Activated CD4-positive, alpha-beta T cell treated with anti-CD3 and anti-CD28 coated beads for 36 hours (primary cell): ENCODE measurements at regions of chr21 and their contacts with region 1.

Region 1: DNA sequence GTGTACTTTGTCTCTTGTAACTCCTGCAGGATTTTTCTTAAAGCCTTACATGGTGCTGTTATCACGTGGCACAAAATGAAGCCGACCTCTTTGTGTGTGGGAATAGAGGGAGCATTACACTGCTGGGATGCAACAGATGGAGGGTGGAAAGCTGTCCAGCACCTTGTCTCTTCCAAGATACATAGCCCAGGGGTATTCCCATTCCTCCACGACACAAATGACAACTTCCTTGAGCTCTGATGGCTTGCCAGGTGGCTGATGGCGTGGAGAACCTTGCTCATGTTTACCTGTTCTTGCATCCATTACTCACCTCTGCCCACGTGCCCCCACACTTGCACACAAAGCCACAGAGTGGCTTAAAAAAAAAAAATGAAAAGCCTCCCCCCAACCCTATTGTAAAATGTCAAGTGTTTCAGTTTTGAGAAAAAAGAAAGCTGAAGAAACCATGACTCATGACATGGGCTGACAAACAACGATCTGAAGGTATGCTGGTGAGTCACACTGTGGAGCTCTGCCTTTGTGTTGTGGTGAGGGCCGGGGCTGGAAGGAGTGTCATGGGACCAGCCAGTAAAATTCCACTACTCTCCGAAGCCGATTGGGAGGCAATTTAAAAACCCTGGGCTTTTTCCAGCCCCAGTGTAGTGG is 32.0 kb upstream of the ATP5PO start:
- DNase-seq: peak; percentile 92
- ATAC-seq: peak; percentile 63
- H3K4me3 Mint-ChIP-seq: peak overlapping the region; percentile 70
- H3K27ac Mint-ChIP-seq: peak overlapping the region; percentile 100
- H3K4me1 Mint-ChIP-seq: peaks cover 79% of the 10 kb centered on the region
- H3K27me3 Mint-ChIP-seq: no peaks in the 10 kb centered on the region

Region 2: DNA sequence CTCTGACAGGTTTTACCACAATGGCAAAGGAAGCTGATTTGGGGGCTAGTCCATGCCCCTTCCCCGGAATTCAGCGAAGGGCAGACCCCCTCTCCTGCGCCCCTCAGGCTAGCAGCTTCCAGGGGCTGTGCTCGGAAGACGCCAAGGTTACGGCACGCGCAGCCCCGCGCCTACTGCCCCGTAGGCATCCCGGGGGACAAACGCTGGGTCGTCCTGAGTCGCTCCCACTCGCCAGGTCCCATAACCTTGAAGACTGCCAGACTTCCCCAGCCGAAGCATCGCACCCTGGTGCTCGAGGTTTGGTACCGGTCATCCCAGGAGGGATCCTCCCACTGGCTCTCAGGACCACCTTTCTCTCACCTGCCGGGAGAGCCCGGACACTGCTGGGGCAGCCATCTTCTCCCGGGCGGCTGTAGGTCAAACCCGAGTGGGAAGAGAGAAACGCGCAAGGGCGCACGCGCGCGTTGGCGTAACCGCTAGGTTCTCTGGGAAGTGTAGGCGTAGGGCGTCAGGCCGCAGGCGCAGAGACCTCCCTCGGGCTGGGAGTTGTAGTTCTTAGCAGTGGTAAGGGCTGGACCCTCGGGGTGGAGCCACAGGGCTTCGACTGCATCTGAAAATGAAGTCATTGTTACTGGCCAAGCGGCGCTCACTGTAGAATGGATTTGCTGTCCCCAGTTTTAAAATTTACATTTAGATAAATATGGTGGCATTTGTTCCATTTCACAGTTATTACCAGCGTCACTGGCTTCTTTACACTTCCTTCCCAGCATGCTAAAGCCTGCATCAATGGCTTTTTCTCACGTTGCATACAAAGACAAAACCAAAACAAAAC is 32.0 kb before region 1 on chr21 and contains the start of gene ATP5PO:
- CTCF ChIA-PET with region 1: no interaction called
- POLR2A ChIA-PET with region 1: no interaction called
- intact Hi-C with region 1: loop called in 1 of 2 experiments (anchors 1 kb)
- DNase-seq: peak; percentile 98
- ATAC-seq: peak; percentile 99
- H3K4me3 Mint-ChIP-seq: peak within 1 kb of the TSS; percentile 89
- H3K27ac Mint-ChIP-seq: peak within 1 kb of the TSS; percentile 97
- H3K4me1 Mint-ChIP-seq: peaks cover 27% of the 10 kb centered on the region
- H3K27me3 Mint-ChIP-seq: no peaks in the 10 kb centered on the region
- total RNA-seq, gene ATP5PO: 177 to 238 TPM

Region 3: DNA sequence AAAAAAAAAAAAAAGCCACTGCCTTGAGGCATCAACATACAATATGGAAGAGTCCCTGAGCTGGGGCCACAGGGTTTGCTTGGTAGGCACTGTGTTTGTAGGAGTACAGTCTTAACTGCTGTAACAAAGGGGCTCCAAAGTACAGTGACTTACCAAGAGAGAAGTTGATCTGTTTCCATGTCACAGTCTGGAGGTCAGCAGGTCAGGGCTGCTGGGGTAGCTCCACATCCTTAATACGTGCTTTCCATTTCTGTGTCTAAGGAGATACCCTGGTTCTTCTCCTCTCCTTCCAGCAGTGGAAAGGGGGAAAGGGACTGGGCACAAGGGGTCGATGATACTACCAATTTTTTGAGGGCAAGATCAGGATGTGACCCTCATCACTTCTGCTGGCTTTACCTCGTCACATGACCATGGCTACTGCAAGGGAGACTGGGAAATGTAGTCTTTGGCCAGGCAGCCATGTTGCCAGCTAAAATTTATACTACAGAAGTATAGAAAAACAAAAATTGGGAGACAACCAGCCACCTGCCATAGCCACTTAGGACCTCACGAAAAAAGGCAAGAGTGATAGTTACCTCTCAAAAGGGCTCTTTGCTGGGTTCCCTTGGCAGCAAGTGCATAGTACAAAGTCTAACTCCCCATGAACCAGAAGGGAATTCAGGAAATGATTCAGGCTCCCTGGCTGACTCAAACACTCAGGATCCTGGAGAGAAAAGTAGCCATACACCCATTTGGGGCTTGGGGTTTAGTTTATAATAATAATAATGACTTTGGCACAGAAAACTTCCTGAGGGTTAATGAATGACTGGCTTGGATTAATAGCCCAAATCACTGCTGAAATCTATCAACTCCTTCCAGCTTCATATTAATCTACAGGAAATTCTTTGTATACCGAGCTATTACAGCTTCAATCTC is 20.8 kb after region 1 on chr21:
- CTCF ChIA-PET with region 1: interaction called, 19 read pairs
- POLR2A ChIA-PET with region 1: interaction called, 7 read pairs
- intact Hi-C with region 1: no loop called
- DNase-seq: peak; percentile 38
- ATAC-seq: peak; percentile 60
- H3K4me3 Mint-ChIP-seq: no peak overlapping the region
- H3K27ac Mint-ChIP-seq: peak overlapping the region; percentile 7
- H3K4me1 Mint-ChIP-seq: peaks cover 21% of the 10 kb centered on the region
- H3K27me3 Mint-ChIP-seq: no peaks in the 10 kb centered on the region

Region 4: GRCh38 chr21:34020005-34020847 is 72.7 kb after region 1 on chr21:
- CTCF ChIA-PET with region 1: interaction called, 3 read pairs
- POLR2A ChIA-PET with region 1: interaction called, 15 read pairs
- intact Hi-C with region 1: loop called (anchors 5 kb)
- DNase-seq: no peak
- ATAC-seq: peak; percentile 30
- H3K4me3 Mint-ChIP-seq: no peak overlapping the region
- H3K27ac Mint-ChIP-seq: no peak overlapping the region
- H3K4me1 Mint-ChIP-seq: peaks cover 11% of the 10 kb centered on the region
- H3K27me3 Mint-ChIP-seq: no peaks in the 10 kb centered on the region

Region 5: DNA sequence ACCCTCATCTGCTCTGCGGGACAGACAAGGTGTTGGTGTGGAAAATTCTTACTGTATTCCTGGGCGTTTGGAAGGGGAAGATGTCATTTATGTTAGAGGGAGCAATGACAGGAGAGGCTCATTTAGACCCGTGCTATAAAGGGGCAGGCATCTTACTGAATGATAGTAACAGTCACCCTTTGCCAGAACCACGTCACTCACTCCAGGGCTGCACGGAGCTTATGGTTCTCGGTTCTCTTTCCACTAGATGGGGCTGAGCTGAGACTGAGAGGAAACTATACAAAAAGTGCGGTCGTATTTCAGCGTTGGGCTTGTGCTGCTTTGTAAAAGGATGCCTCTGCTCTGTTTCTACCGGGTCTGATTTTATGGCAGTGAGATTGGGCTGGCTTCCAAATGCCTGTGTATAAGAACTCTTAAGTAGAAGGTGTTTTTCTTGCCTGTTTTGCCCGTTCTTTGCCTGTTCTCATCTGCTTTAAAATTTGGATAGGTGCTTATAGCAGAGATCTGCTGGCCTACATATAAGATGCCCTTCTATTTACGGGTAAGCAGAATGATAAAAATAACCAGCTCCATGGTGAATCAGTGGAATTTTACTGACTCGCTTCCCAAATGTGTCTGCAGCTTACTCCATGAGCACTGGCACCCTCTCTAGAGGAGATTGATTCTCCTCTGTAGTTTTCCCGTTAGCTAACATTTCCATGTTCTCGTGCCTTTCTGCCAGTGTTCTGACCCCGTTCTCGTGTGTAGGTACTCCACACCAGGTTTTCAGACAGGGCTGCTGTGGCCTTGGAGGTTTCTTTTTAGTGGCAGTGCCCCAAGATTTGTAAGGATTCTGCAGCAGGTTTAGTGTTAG is 181.7 kb after region 1 on chr21:
- CTCF ChIA-PET with region 1: interaction called, 4 read pairs
- POLR2A ChIA-PET with region 1: interaction called, 10 read pairs
- intact Hi-C with region 1: loop called in 1 of 2 experiments (anchors 5 kb)
- DNase-seq: peak; percentile 87
- ATAC-seq: peak; percentile 94
- H3K4me3 Mint-ChIP-seq: peak overlapping the region; percentile 60
- H3K27ac Mint-ChIP-seq: peak overlapping the region; percentile 94
- H3K4me1 Mint-ChIP-seq: peaks cover 89% of the 10 kb centered on the region
- H3K27me3 Mint-ChIP-seq: no peaks in the 10 kb centered on the region

Region 6: DNA sequence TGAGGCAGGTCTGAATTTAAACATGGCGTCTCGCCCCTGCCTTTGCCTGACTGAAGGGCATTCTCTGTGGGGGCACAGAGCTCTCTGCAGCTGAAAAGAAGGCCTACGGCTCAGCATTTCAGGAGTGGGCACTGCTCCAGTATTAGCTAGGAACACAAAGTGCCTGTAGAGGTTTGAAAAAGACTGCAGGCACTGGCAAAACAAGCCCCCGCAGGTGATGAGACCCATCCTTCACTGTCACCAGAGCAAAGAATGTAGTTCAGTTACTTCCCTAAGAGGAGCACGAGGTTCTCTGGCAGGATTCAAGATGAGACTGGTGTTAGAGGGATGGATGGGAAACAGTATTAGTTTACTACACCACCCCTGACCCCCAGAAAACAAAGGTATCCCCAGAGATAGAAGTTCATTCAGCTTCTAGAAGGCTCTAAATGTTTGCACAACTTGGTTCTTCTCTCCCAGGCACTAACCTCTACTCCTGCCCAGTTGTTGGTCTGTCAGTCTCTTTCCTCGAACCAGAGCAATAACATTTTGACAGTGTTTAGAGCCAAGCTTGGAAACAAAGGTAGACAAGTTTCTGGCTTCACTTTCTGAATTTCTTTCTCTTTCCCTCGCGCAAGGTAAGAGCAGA is 314.4 kb after region 1 on chr21:
- CTCF ChIA-PET with region 1: no interaction called
- POLR2A ChIA-PET with region 1: no interaction called
- intact Hi-C with region 1: no loop called
- DNase-seq: no peak
- ATAC-seq: no peak
- H3K4me3 Mint-ChIP-seq: no peak overlapping the region
- H3K27ac Mint-ChIP-seq: no peak overlapping the region
- H3K4me1 Mint-ChIP-seq: no peaks in the 10 kb centered on the region
- H3K27me3 Mint-ChIP-seq: peaks cover 2% of the 10 kb centered on the region